Aorta (tissue), 5 donors: ENCODE measurements at regions of chr6 and their contacts with region 1.

Region 1: DNA sequence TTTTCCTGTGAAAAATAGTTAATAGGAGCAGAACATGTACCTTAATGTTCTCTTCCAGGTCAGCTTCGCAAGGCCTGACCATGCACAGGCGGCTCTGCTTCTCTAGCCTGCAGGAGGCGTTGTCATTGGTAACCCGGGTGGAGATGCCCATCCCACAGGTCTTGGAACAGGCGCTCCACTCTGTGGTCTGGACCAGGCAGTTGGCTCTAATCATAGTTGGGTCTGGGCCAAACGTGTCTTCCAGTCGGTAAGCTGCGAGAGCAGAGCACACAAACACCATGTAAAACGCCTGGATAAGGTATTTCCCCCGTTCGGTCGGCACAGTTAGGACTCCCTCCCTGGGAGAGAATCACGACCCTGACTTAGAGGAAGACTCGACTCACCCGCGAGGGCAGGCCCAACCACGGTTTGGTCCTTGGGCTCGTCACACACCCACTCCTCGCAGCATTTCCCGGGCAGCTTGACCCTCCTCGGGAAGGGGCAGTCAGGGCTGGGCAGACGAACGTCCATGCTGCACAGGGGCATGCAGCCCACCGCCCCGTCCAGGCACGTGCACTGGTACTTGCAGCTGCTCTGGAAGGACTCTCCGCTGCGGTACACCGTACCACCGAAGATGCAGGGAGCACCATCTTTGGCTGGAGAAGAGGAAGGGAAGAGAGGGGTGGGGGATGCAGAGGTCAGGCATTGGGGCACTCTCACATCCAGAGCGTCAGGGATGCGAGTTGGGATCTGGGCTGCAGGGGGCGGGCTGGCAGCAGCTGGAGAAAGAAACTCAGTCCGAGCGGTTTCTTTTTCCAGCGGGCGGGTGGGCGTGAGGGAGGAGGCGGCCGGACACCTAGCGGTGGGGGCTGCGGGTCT is 1.0 kb downstream of the CCN2 start:
- DNase-seq: peak; percentile 83 to 88
- ATAC-seq: peak; percentile 84
- H3K4me3 ChIP-seq: peak overlapping the region; percentile 41 to 72
- H3K27ac ChIP-seq: peak overlapping the region; percentile 56 to 98
- H3K4me1 ChIP-seq: peaks cover 2 to 7% of the 10 kb centered on the region in 2 donors
- H3K27me3 ChIP-seq: no peaks in the 10 kb centered on the region

Region 2: DNA sequence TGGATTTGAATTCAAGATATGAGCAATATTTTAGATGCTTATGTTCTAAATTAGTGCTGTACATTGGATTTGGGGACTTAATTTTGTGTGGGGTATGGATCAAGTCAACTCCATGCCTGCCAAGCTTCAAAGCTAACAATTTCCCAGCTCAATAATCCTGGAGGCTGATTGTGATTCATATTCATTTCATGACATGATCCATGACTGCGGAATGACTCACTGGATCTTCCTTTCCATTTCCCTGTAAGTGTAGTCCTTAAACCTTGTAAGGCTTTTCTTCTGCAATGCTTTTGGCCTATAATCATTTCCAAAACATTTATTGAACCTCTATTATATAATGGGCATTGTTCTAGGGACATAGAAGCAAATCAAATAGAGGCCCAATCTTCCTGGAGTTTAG is 45.8 kb after region 1 on chr6:
- intact Hi-C with region 1: loop called (anchors 5 kb)
- DNase-seq: no peak
- ATAC-seq: no peak
- H3K4me3 ChIP-seq: no peak overlapping the region
- H3K27ac ChIP-seq: no peak overlapping the region
- H3K4me1 ChIP-seq: peaks cover 0 to 1% of the 10 kb centered on the region in 2 donors
- H3K27me3 ChIP-seq: no peaks in the 10 kb centered on the region

Region 3: DNA sequence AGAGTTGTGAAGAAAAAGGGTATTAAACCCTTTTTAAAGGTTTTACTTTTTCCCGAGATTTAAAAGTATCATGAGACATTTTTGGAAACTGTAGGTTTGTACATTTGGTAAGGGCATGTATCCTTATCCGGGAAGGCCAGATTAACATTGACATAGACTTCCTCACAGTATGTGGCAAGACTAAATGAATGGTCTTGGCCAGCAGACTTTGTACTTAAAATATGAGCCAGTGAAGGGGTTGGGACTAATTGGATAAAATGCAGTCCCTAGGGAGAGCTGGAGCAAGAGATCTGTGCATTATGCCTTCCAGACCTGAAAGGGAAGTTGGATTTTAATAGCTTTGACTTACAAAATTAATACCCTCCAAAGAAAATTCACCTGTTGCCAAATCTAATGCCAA is 61.4 kb after region 1 on chr6:
- intact Hi-C with region 1: loop called in 1 of 2 experiments (anchors 5 kb)
- DNase-seq: no peak
- ATAC-seq: peak; percentile 77
- H3K4me3 ChIP-seq: peak overlapping the region in 1 of 2 donors; percentile 10
- H3K27ac ChIP-seq: peak overlapping the region; percentile 63 to 93
- H3K4me1 ChIP-seq: peaks cover 3 to 9% of the 10 kb centered on the region in 2 donors
- H3K27me3 ChIP-seq: no peaks in the 10 kb centered on the region

Region 4: DNA sequence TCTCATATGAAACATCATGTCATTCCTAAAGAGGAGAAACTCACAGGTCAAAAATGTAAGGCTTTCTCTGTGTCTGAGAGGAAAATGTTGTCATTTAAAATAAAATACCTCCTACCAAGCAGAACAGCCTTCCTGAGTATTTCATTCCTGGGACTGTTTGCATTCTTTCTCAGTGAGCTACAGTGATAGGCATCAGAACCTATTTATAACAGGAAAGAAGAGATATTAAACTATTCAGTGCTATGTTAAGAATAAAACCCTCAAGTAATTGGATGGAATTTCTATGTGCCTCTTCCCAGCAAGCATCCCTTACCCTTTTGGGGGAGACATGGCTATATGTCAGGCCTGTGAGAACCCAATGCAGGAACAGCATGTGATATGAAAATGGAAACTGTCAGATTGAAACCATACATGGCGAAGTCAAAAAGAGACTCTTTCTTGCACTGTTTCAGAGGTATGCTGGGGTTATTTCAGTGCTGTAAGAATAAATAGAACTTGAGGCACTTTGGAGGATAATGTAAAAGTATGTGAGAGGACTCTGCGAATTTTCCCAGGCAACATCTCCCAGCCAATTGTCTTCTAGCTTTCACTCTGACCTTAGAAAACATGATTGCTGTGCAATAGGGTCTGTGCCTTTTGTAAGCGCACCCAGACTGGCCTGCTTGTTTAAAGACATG is 134.8 kb after region 1 on chr6:
- intact Hi-C with region 1: loop called (anchors 2 to 5 kb)
- DNase-seq: no peak
- ATAC-seq: peak; percentile 77
- H3K4me3 ChIP-seq: no peak overlapping the region
- H3K27ac ChIP-seq: peak overlapping the region; percentile 83 to 97
- H3K4me1 ChIP-seq: peaks cover 0 to 4% of the 10 kb centered on the region in 2 donors
- H3K27me3 ChIP-seq: no peaks in the 10 kb centered on the region

Region 5: GRCh38 chr6:132131758-132132157 is 181.6 kb after region 1 on chr6:
- intact Hi-C with region 1: loop called (anchors 2 kb)
- DNase-seq: peak; percentile 70 to 81
- ATAC-seq: peak; percentile 84
- H3K4me3 ChIP-seq: no peak overlapping the region
- H3K27ac ChIP-seq: peak overlapping the region; percentile 84 to 98
- H3K4me1 ChIP-seq: peaks cover 0 to 9% of the 10 kb centered on the region in 2 donors
- H3K27me3 ChIP-seq: no peaks in the 10 kb centered on the region

Region 6: GRCh38 chr6:132161283-132161682 is 211.1 kb after region 1 on chr6:
- intact Hi-C with region 1: loop called in 1 of 2 experiments (anchors 5 kb)
- DNase-seq: no peak
- ATAC-seq: peak; percentile 74
- H3K4me3 ChIP-seq: no peak overlapping the region
- H3K27ac ChIP-seq: no peak overlapping the region
- H3K4me1 ChIP-seq: peaks cover 0 to 2% of the 10 kb centered on the region in 2 donors
- H3K27me3 ChIP-seq: no peaks in the 10 kb centered on the region

Region 7: GRCh38 chr6:133286765-133287164 is 1336.6 kb after region 1 on chr6:
- intact Hi-C with region 1: no loop called
- DNase-seq: no peak
- ATAC-seq: no peak
- H3K4me3 ChIP-seq: no peak overlapping the region
- H3K27ac ChIP-seq: no peak overlapping the region
- H3K4me1 ChIP-seq: no peaks in the 10 kb centered on the region
- H3K27me3 ChIP-seq: no peaks in the 10 kb centered on the region